Activated CD4-positive, alpha-beta memory T cell treated with anti-CD3 and anti-CD28 coated beads, Interleukin-2, amount 10 ng/mL, durations not matched to agents 7 days and 5 days (primary cell): ENCODE measurements at regions of chr2 and their contacts with region 1.

Region 1: DNA sequence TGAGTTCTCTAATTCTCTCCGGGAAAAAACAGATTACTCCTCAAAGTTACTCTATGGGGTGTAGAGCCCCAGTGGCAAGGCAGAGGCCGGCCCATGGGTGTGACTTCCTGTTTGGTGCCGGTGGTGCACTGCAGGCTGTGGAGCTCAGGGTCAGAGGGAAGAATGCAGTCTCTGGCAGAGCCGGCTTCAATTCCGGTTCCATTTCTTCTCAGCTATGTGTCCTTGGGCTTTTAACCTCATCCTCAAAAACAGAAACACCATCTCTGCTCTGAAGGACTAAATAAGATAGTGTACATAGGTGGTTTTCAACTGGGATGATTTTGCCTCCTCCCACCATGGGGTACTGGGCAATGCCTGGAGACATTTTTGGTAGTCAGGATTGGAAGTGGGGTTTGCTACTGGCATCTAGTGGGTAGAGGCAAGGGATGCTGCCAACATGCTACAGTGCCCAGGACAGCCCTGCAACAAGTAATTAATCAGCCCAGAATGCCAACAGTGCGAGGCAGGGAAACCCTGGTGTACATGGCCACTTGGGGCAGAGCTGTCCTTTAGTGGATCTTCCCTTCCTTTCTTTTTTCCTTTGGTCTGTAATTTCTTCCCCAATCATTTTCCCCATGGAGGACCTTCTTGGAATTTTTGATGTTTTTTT is 81.2 kb downstream of the INSIG2 start:
- DNase-seq: peak; percentile 55
- H3K4me3 Mint-ChIP-seq: peak overlapping the region; percentile 12
- H3K27ac Mint-ChIP-seq: no peak overlapping the region
- H3K4me1 Mint-ChIP-seq: no peaks in the 10 kb centered on the region
- H3K27me3 Mint-ChIP-seq: peaks cover 2% of the 10 kb centered on the region

Region 2: GRCh38 chr2:118186110-118186857 is 16.8 kb after region 1 on chr2:
- CTCF ChIA-PET with region 1: no interaction called
- POLR2A ChIA-PET with region 1: interaction called, 22 read pairs
- DNase-seq: peak; percentile 90
- H3K4me3 Mint-ChIP-seq: peak overlapping the region; percentile 87
- H3K27ac Mint-ChIP-seq: peak overlapping the region; percentile 94
- H3K4me1 Mint-ChIP-seq: peaks cover 23% of the 10 kb centered on the region
- H3K27me3 Mint-ChIP-seq: peaks cover 3% of the 10 kb centered on the region